Heart right ventricle (tissue), 16 donors: ENCODE measurements at regions of chr9 and their contacts with region 1.

Region 1: GRCh38 chr9:22446950-22447617 is 460 bp downstream of the DMRTA1 start:
- DNase-seq: peak; percentile 10 to 67
- ATAC-seq: peak; percentile 83 to 94 (median 84)
- H3K4me3 ChIP-seq: peak overlapping the region; percentile 23 to 69 (median 64)
- H3K27ac ChIP-seq: peak overlapping the region in 9 of 10 donors; percentile 48 to 86 (median 80)
- H3K4me1 ChIP-seq: peaks cover 0 to 17% (median 8%) of the 10 kb centered on the region in 9 donors
- H3K27me3 ChIP-seq: peaks cover 0 to 73% (median 27%) of the 10 kb centered on the region in 7 donors
- CTCF ChIP-seq: peak in 2 of 9 donors; percentile 23 to 35

Region 2: DNA sequence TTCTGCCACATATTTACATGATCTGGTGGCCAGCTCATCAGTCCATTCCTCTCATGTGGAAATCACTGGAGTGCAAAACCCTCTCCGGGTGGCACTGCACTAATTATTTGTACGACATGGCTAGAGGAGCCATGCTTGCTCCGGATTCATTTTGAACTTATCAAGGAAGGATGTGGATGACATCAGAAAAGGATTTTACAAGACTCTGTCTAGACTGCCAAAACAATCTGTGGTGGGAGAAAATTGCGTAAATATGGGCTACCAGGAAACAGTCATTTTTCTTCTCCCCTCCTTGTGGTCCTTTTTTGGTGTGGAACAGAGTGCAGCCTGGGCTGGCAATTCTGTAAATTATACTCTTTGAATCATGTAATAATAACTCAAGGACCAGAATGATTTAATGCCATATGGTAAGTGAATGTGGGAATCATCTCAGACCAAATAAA is 841.6 kb before region 1 on chr9:
- intact Hi-C with region 1: loop called in 1 of 10 experiments (anchors 10 kb)
- DNase-seq: no peak
- ATAC-seq: peak in 1 of 8 donors; percentile 35
- H3K4me3 ChIP-seq: no peak overlapping the region
- H3K27ac ChIP-seq: peak overlapping the region in 1 of 10 donors; percentile 76
- H3K4me1 ChIP-seq: no peaks in the 10 kb centered on the region
- H3K27me3 ChIP-seq: peaks cover 0 to 10% (median 4%) of the 10 kb centered on the region in 7 donors
- CTCF ChIP-seq: no peak

Region 3: GRCh38 chr9:22244141-22245011 is 202.7 kb before region 1 on chr9:
- intact Hi-C with region 1: loop called in 5 of 10 experiments (anchors 5 to 10 kb)
- DNase-seq: no peak
- ATAC-seq: peak in 2 of 8 donors; percentile 33 to 53
- H3K4me3 ChIP-seq: peak overlapping the region in 5 of 10 donors; percentile 3 to 30 (median 20)
- H3K27ac ChIP-seq: no peak overlapping the region
- H3K4me1 ChIP-seq: peaks cover 0 to 19% (median 0%) of the 10 kb centered on the region in 9 donors
- H3K27me3 ChIP-seq: peaks cover 0 to 10% (median 0%) of the 10 kb centered on the region in 7 donors
- CTCF ChIP-seq: peak in 8 of 9 donors; percentile 19 to 62 (median 44)

Region 4: GRCh38 chr9:22307013-22307711 is 139.9 kb before region 1 on chr9:
- intact Hi-C with region 1: loop called (anchors 2 to 10 kb)
- DNase-seq: peak in 1 of 2 donors; percentile 13
- ATAC-seq: peak in 1 of 8 donors; percentile 47
- H3K4me3 ChIP-seq: no peak overlapping the region
- H3K27ac ChIP-seq: no peak overlapping the region
- H3K4me1 ChIP-seq: no peaks in the 10 kb centered on the region
- H3K27me3 ChIP-seq: peaks cover 0 to 28% (median 0%) of the 10 kb centered on the region in 7 donors
- CTCF ChIP-seq: peak; percentile 22 to 71 (median 64)